Ascending aorta (tissue), 2 donors: ENCODE measurements at regions of chr13 and their contacts with region 1.

Region 1: GRCh38 chr13:77386880-77387606 is 60.1 kb upstream of the MYCBP2 start:
- DNase-seq: peak in 1 of 2 donors; percentile 84
- H3K4me3 ChIP-seq: peak overlapping the region in 1 of 2 donors; percentile 21
- H3K27ac ChIP-seq: peak overlapping the region; percentile 73 to 89
- H3K4me1 ChIP-seq: peaks cover 5 to 18% of the 10 kb centered on the region in 2 donors
- H3K27me3 ChIP-seq: no peaks in the 10 kb centered on the region
- CTCF ChIP-seq: no peak

Region 2: GRCh38 chr13:76175961-76176725 is 1210.9 kb before region 1 on chr13:
- intact Hi-C with region 1: no loop called
- DNase-seq: no peak
- H3K4me3 ChIP-seq: no peak overlapping the region
- H3K27ac ChIP-seq: no peak overlapping the region
- H3K4me1 ChIP-seq: no peaks in the 10 kb centered on the region
- H3K27me3 ChIP-seq: no peaks in the 10 kb centered on the region
- CTCF ChIP-seq: no peak

Region 3: GRCh38 chr13:77026818-77027585 is 360.0 kb before region 1 on chr13 and contains the start of gene FBXL3:
- intact Hi-C with region 1: loop called (anchors 5 kb)
- DNase-seq: peak; percentile 36 to 91
- H3K4me3 ChIP-seq: peak within 1 kb of the TSS; percentile 88 to 100
- H3K27ac ChIP-seq: peak within 1 kb of the TSS; percentile 95 to 100
- H3K4me1 ChIP-seq: peaks cover 0 to 6% of the 10 kb centered on the region in 2 donors
- H3K27me3 ChIP-seq: no peaks in the 10 kb centered on the region
- CTCF ChIP-seq: no peak
- total RNA-seq, gene FBXL3: 102 TPM

Region 4: DNA sequence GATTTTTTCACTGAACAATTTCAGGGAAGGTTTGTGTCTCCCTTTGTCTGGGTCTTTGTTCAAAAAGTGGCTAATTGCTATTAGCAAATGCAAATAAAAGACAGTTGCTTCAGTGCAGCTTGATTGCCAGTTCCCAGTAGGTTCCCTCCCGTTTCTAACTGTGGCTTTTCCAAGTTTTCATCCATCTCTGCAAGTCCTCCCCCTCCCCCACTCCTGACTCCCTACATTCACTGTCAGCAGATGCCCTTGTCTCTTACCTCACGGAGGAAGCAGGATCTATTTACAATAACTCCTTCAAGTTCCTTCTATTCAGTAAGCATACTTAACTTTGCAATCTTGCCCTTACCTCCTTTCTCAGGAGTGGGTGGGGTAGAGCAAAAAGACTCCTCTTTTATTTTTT is 93.0 kb after region 1 on chr13:
- intact Hi-C with region 1: loop called (anchors 2 kb)
- DNase-seq: no peak
- H3K4me3 ChIP-seq: no peak overlapping the region
- H3K27ac ChIP-seq: no peak overlapping the region
- H3K4me1 ChIP-seq: peaks cover 0 to 6% of the 10 kb centered on the region in 2 donors
- H3K27me3 ChIP-seq: no peaks in the 10 kb centered on the region
- CTCF ChIP-seq: no peak

Region 5: DNA sequence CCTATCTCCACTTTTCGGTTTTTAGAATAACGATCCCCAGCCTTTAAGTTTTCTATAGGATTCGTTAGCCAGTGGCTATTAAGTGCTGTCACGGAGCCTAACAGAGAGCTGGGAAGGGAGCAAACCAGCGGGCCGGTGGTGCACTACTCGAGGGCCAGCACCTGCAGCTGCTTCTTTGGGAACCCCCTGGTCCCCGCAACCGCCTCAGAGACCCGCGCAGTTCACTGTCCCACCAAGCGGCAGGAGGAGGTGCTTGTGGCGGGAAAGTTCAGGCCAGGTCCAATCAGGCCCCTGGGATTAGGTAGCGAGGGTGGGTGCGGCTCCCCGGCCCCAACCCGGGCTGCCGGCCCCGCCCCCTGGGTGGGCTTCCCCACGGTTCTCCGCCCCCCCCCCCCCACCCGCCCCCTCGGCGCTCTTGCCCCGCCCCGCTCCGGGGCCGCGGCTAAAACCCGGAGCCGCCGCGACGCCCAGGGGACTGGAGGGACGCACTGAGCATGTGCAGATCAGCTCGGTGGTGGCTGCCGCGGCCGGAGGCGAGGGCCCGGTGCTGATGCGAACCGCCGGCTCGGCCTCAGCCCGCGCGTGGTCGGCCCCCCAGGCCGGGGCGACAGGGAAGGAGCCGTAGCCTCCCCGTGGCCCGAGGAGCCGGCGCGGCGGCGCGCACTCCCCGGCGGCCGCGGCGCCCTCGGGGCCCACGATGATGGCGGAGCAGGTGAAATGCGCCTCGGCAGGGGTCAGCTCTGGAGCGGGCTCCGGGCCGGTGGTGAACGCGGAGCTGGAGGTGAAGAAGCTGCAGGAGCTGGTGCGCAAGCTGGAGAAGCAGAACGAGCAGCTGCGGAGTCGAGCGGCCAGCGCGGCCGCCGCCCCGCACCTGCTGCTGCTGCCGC is 310.4 kb after region 1 on chr13 and contains the start of gene SLAIN1:
- intact Hi-C with region 1: loop called (anchors 5 kb)
- DNase-seq: peak; percentile 38 to 90
- H3K4me3 ChIP-seq: peak within 1 kb of the TSS; percentile 90 to 99
- H3K27ac ChIP-seq: peak within 1 kb of the TSS; percentile 74 to 80
- H3K4me1 ChIP-seq: peaks cover 0 to 8% of the 10 kb centered on the region in 2 donors
- H3K27me3 ChIP-seq: no peaks in the 10 kb centered on the region
- CTCF ChIP-seq: no peak
- total RNA-seq, gene SLAIN1: 7.1 TPM

Region 6: GRCh38 chr13:77779552-77780272 is 392.7 kb after region 1 on chr13:
- intact Hi-C with region 1: no loop called
- DNase-seq: no peak
- H3K4me3 ChIP-seq: peak overlapping the region in 1 of 2 donors; percentile 6
- H3K27ac ChIP-seq: no peak overlapping the region
- H3K4me1 ChIP-seq: no peaks in the 10 kb centered on the region
- H3K27me3 ChIP-seq: no peaks in the 10 kb centered on the region
- CTCF ChIP-seq: peak; percentile 8 to 55 (median 39)